Activated CD8-positive, alpha-beta memory T cell treated with anti-CD3 and anti-CD28 coated beads, Interleukin-2, amount 10 ng/mL, durations not matched to agents 7 days and 5 days (primary cell): ENCODE measurements at regions of chr3 and their contacts with region 1.

Region 1: DNA sequence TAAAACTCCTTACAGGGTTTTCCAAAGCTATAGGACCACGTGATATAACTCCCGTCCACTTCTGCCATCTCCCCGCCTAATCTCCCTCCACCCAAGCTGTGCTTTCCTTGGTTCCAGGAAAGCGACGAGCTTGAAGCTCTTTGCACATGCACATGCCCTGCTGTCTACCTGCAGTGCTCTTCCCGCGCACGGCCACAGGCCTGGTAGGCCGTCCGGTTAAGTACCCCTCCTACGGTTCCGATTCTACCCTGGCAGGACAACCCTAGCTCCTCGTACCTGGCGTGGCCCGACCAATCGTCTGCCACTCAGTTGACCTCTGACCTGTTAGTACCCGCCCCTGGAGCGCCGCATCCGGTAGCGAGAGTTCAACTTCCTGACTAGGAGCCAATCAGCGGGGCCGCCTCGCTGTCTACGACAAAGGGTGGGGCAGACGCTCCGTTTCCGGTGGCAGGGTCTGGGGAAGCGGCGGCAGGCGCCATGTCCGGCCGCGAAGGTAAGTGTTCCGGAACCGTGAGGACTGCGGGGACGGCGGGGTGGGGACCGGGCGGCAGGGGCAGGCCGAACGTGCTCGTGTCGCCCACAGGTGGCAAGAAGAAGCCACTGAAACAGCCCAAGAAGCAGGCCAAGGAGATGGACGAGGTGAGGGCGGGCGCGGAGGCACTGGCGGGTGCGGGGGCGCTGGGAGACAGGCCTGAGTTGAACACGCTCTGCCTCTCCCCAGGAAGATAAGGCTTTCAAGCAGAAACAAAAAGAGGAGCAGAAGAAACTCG is at the starts of genes CCDC51 and TMA7:
- DNase-seq: peak; percentile 99
- ATAC-seq: peak; percentile 96
- H3K4me3 Mint-ChIP-seq: peak within 1 kb of the TSS; percentile 97
- H3K27ac Mint-ChIP-seq: peak within 1 kb of the TSS; percentile 97
- H3K4me1 Mint-ChIP-seq: peaks cover 45% of the 10 kb centered on the region
- H3K27me3 Mint-ChIP-seq: no peaks in the 10 kb centered on the region
- total RNA-seq, gene CCDC51: 18.4 to 21.9 TPM
- total RNA-seq, gene TMA7: 219 to 298 TPM

Region 2: GRCh38 chr3:48188266-48189201 is 251.5 kb before region 1 on chr3 and contains the start of gene CDC25A:
- CTCF ChIA-PET with region 1: interaction called, 24 read pairs
- DNase-seq: peak; percentile 99
- ATAC-seq: peak; percentile 99
- H3K4me3 Mint-ChIP-seq: peak within 1 kb of the TSS; percentile 96
- H3K27ac Mint-ChIP-seq: peak within 1 kb of the TSS; percentile 81
- H3K4me1 Mint-ChIP-seq: peaks cover 30% of the 10 kb centered on the region
- H3K27me3 Mint-ChIP-seq: peaks cover 3% of the 10 kb centered on the region
- total RNA-seq, gene CDC25A: 33.1 to 39.4 TPM

Region 3: DNA sequence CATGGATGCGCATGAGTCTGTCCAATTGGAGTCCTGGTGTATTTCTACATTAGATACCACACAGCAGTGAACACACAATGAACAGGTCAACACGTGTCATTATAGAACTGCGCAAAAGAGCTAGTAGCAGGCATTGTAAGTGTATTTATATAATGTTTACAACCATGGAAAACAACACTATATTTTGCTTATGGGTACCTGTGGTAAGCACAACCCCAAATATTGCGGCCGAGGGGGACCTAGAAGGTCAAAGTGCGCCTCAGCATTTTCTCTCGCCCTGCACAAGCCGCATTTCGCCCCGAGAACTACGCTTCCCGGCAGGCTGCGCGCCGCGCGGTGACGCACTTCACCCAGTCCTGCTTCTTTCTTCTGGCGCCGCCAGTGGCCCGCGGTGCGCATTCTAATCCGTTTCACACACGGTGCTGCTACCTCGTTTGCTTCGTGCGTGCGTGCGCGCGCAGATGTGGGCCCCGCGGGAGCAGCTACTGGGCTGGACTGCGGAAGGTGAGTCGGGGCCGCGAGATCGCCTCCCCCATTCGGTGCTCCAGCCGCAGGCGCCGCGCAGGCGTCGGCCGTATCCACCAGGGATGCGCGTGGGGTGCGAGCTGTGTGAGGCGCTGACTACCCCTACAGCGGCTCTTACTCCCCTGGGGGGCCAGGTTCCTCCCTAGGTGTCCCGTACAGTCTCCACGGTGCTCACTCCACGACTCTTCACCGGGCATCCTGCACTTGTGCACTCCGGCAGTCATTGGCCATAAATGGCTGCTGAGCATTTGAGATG is 199.1 kb before region 1 on chr3 and contains the start of gene ZNF589:
- CTCF ChIA-PET with region 1: interaction called, 46 read pairs
- DNase-seq: peak; percentile 98
- ATAC-seq: peak; percentile 99
- H3K4me3 Mint-ChIP-seq: peak within 1 kb of the TSS; percentile 87
- H3K27ac Mint-ChIP-seq: peak within 1 kb of the TSS; percentile 92
- H3K4me1 Mint-ChIP-seq: peaks cover 34% of the 10 kb centered on the region
- H3K27me3 Mint-ChIP-seq: no peaks in the 10 kb centered on the region
- total RNA-seq, gene ZNF589: 25.3 to 36.3 TPM

Region 4: DNA sequence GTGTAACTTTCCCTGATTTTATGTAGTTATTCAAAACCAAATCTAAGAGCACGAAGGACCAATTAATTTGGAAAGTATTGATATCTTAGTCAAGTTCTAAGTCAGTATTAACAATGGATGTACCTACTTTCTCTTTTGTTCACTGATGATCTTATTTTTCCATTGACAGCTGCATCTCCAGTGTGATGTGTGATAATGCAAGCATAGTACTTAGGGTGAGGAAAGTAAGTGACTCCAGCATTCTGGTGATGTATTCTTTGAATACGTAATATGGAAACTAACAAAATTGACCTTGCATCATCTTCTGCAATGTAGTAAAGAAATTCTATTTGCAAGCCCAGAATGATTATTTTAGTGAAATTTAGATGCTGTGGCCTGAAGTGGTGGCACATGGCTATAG is 45.6 kb before region 1 on chr3:
- CTCF ChIA-PET with region 1: interaction called, 161 read pairs
- DNase-seq: no peak
- ATAC-seq: peak; percentile 39
- H3K4me3 Mint-ChIP-seq: no peak overlapping the region
- H3K27ac Mint-ChIP-seq: no peak overlapping the region
- H3K4me1 Mint-ChIP-seq: no peaks in the 10 kb centered on the region
- H3K27me3 Mint-ChIP-seq: peaks cover 19% of the 10 kb centered on the region

Region 5: GRCh38 chr3:48425218-48426075 is 14.6 kb before region 1 on chr3:
- CTCF ChIA-PET with region 1: interaction called, 43 read pairs
- DNase-seq: no peak
- ATAC-seq: no peak
- H3K4me3 Mint-ChIP-seq: no peak overlapping the region
- H3K27ac Mint-ChIP-seq: no peak overlapping the region
- H3K4me1 Mint-ChIP-seq: peaks cover 2% of the 10 kb centered on the region
- H3K27me3 Mint-ChIP-seq: peaks cover 20% of the 10 kb centered on the region

Region 6: GRCh38 chr3:48478596-48479555 is 38.9 kb after region 1 on chr3:
- CTCF ChIA-PET with region 1: interaction called, 46 read pairs
- DNase-seq: peak; percentile 86
- ATAC-seq: peak; percentile 73
- H3K4me3 Mint-ChIP-seq: peak overlapping the region; percentile 84
- H3K27ac Mint-ChIP-seq: peak overlapping the region; percentile 95
- H3K4me1 Mint-ChIP-seq: peaks cover 49% of the 10 kb centered on the region
- H3K27me3 Mint-ChIP-seq: no peaks in the 10 kb centered on the region

Region 7: GRCh38 chr3:48635222-48636021 is 195.4 kb after region 1 on chr3 and contains the start of gene SLC26A6:
- CTCF ChIA-PET with region 1: interaction called, 15 read pairs
- DNase-seq: peak; percentile 96
- ATAC-seq: peak; percentile 96
- H3K4me3 Mint-ChIP-seq: peak within 1 kb of the TSS; percentile 85
- H3K27ac Mint-ChIP-seq: peak within 1 kb of the TSS; percentile 88
- H3K4me1 Mint-ChIP-seq: peaks cover 20% of the 10 kb centered on the region
- H3K27me3 Mint-ChIP-seq: no peaks in the 10 kb centered on the region
- total RNA-seq, gene SLC26A6: 44.9 to 59.0 TPM

Region 8: GRCh38 chr3:48756640-48757039 is 316.6 kb after region 1 on chr3:
- CTCF ChIA-PET with region 1: no interaction called
- DNase-seq: no peak
- ATAC-seq: peak; percentile 30
- H3K4me3 Mint-ChIP-seq: no peak overlapping the region
- H3K27ac Mint-ChIP-seq: no peak overlapping the region
- H3K4me1 Mint-ChIP-seq: no peaks in the 10 kb centered on the region
- H3K27me3 Mint-ChIP-seq: no peaks in the 10 kb centered on the region

Region 9: DNA sequence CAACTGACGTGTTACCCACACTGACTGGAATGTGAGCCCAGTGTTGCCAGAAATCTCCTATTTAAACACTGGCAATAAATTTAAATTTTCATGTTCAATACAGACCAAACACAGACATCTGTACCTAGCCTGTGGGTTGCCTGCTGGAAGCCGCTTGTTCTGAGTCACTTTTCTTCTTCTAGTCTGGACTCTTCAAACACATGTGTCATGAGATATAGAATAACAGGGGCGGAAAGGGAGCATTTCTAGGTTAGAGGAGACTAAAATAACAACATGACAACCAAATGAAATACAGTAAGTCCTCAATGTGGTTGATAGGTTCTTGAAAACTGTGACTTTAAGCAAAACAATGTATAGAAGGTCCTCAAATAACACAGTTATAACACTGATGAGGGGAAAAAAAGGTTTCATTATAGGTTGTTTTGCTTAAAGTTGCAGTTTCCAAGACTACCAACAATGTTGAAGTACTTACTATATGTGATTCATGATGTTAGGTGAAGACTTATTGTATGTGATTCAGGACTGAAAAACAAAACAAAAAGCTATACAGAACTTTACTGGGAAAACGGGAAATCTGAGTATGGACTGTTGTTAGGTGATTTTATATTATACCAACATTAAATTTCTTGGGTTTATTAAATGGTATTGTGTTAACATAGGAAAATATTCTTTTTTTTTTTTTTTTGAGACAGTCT is 344.6 kb after region 1 on chr3:
- CTCF ChIA-PET with region 1: no interaction called
- DNase-seq: no peak
- ATAC-seq: no peak
- H3K4me3 Mint-ChIP-seq: no peak overlapping the region
- H3K27ac Mint-ChIP-seq: no peak overlapping the region
- H3K4me1 Mint-ChIP-seq: peaks cover 9% of the 10 kb centered on the region
- H3K27me3 Mint-ChIP-seq: no peaks in the 10 kb centered on the region